ENCODE measurements at regions of chr13 and their contacts with region 1.

Region 1: GRCh38 chr13:47519626-47520025 is 481.4 kb downstream of the SUCLA2 start:
- DNase-seq: no peak
- H3K4me3 ChIP-seq: no peak overlapping the region
- H3K27ac ChIP-seq: no peak overlapping the region
- H3K27me3 ChIP-seq: no peaks in the 10 kb centered on the region
- CTCF ChIP-seq: no peak

Region 2: GRCh38 chr13:47539317-47539716 is 19.7 kb after region 1 on chr13:
- intact Hi-C with region 1: loop called in 1 of 2 experiments (anchors 2 kb)
- DNase-seq: no peak
- H3K4me3 ChIP-seq: no peak overlapping the region
- H3K27ac ChIP-seq: no peak overlapping the region
- H3K27me3 ChIP-seq: no peaks in the 10 kb centered on the region
- CTCF ChIP-seq: no peak

Region 3: DNA sequence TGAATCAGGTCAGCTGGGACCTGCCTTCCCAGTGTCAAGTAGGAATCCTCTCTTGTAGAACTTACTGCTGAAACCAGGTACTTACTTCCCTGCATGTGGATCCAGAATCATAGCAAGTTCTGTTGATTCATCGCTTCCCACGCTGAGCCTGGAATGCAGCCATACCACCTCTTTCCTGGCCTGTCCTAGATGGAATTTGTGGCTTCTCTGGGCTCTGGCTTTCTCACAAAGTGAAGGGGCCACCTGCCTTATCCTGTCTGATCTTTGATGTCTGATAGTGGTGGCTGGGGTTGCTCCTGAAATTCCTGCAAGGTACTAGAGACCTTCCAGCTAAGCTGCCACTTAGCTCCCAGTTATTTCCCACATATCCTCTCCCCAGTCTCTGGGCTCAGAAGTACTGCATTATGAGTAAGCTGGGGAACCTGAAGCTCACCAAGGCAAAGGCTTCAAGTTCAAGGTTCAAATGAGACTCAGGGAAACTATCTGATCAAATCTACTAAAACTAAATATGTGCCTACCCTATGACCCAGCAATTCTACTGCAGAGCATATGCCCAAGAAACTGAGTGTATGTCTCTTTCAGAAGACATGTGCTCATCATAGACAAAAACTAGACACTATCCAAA is 377.9 kb after region 1 on chr13:
- intact Hi-C with region 1: no loop called
- DNase-seq: peak in 5 of 10 donors; percentile 18 to 65 (median 60)
- H3K4me3 ChIP-seq: no peak overlapping the region
- H3K27ac ChIP-seq: peak overlapping the region in 4 of 59 donors; percentile 4 to 54 (median 16)
- H3K27me3 ChIP-seq: no peaks in the 10 kb centered on the region
- CTCF ChIP-seq: no peak